CD4-positive, alpha-beta T cell (primary cell): ENCODE measurements at regions of chr7 and their contacts with region 1.

Region 1: DNA sequence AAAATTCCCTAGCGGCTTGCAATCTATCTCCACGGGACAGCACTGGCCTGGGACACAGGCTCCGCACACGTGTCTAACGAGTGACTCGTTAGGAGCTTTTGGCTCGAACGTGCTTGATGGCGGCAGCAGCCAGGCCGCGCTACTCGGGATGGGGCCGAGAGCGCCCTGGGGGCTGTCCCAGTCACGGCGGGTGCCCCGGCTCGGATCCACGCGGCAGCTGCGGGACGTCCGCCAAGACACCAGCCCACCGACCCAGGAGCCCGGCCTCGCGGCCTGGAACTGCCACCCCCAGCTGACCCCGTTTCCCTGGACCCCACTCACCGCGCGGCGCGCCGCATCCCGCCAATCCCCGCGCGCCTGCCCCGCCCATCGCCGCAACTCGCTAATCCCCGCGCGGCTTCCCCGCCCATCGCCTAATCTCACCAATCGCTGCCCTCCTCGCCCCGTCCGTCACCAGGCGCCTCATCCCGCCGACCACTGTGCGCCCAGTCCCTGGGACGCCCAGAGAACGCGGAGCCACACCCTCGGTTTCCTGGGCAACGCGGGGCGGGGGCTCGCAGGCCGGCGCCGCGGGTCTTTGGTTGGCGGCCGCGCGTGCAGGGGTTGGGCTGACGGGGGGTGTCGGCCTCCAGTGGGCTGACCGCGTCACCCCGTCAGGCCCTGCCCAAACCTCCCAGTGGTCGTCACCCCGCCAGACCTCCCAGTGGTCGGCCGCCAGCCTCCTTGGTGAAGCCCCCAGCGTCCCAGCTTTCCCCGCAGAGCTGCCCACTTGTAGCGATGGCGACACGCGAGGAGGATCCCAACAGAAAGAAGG is at the start of gene POLD2:
- DNase-seq: peak; percentile 91 to 98 (median 97)
- ATAC-seq: peak; percentile 98
- H3K4me3 ChIP-seq: peak within 1 kb of the TSS; percentile 82
- H3K4me3 Mint-ChIP-seq: peak within 1 kb of the TSS; percentile 92
- H3K27ac ChIP-seq: peak within 1 kb of the TSS; percentile 33 to 67
- H3K27ac Mint-ChIP-seq: peak within 1 kb of the TSS; percentile 65
- H3K4me1 ChIP-seq: peaks cover 27% of the 10 kb centered on the region
- H3K4me1 Mint-ChIP-seq: peaks cover 17% of the 10 kb centered on the region
- H3K27me3 ChIP-seq: no peaks in the 10 kb centered on the region
- H3K27me3 Mint-ChIP-seq: no peaks in the 10 kb centered on the region
- CTCF ChIP-seq: no peak
- total RNA-seq, gene POLD2: 45.2 to 48.3 TPM

Region 2: GRCh38 chr7:43869006-43869866 is 254.2 kb before region 1 on chr7 and contains the start of gene MRPS24:
- CTCF ChIA-PET with region 1: no interaction called
- POLR2A ChIA-PET with region 1: no interaction called
- intact Hi-C with region 1: loop called in 1 of 2 experiments (anchors 10 kb)
- DNase-seq: peak; percentile 92 to 99 (median 95)
- ATAC-seq: peak; percentile 98
- H3K4me3 ChIP-seq: peak within 1 kb of the TSS; percentile 70
- H3K4me3 Mint-ChIP-seq: peak within 1 kb of the TSS; percentile 92
- H3K27ac ChIP-seq: peak within 1 kb of the TSS; percentile 58 to 68
- H3K27ac Mint-ChIP-seq: peak within 1 kb of the TSS; percentile 90
- H3K4me1 ChIP-seq: peaks cover 20% of the 10 kb centered on the region
- H3K4me1 Mint-ChIP-seq: peaks cover 26% of the 10 kb centered on the region
- H3K27me3 ChIP-seq: no peaks in the 10 kb centered on the region
- H3K27me3 Mint-ChIP-seq: no peaks in the 10 kb centered on the region
- CTCF ChIP-seq: no peak
- total RNA-seq, gene MRPS24: 63.1 to 69.7 TPM

Region 3: DNA sequence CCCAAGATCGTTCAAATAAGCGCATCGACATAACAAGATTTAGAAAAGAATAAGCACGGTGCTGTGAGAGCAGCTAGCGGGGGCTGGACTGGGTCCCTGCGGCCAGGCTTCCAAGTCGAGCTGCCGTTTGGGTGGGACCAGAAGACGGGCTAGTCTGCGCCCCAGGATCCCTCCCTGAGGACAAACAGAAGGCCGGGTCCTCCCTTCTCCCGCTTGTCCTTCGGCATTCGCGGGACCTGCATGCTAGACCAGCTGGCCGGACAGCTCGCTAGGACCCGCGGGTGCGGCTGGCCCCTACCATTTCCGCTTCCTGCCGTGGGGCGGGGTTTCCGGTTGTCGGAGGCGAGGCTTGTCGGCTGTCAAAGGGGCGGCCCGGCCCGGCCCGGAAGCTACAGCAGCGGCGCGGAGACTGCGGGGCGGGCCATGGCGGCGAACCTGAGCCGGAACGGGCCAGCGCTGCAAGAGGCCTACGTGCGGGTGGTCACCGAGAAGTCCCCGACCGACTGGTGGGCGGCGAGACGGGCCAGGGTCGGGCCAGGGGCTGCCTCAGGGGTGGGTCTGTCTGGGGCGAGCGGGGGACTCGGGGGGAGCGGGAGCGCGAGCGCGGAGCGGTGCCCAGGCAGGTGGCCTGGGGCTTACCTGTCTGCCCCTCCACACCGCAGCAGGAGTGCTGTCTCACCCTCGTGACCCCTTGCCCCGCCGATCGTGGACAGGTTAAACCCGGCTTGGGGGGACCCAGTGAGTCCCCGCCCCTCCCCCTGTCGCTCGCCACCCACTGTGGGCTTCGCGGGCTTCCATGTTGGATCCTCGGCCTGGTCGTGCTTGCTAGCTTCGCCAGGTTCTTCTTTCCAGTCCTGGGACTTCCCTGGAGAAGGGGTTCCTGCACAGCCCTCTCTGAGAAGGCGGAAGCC is 78.8 kb before region 1 on chr7 and contains the start of gene DBNL:
- CTCF ChIA-PET with region 1: no interaction called
- POLR2A ChIA-PET with region 1: no interaction called
- intact Hi-C with region 1: loop called in 1 of 2 experiments (anchors 5 kb)
- DNase-seq: peak; percentile 75 to 92 (median 88)
- ATAC-seq: peak; percentile 54
- H3K4me3 ChIP-seq: peak within 1 kb of the TSS; percentile 99
- H3K4me3 Mint-ChIP-seq: peak within 1 kb of the TSS; percentile 87
- H3K27ac ChIP-seq: peak within 1 kb of the TSS; percentile 89
- H3K27ac Mint-ChIP-seq: peak within 1 kb of the TSS; percentile 91
- H3K4me1 ChIP-seq: peaks cover 62% of the 10 kb centered on the region
- H3K4me1 Mint-ChIP-seq: peaks cover 50% of the 10 kb centered on the region
- H3K27me3 ChIP-seq: no peaks in the 10 kb centered on the region
- H3K27me3 Mint-ChIP-seq: no peaks in the 10 kb centered on the region
- CTCF ChIP-seq: no peak
- total RNA-seq, gene DBNL: 88.5 to 90.6 TPM

Region 4: DNA sequence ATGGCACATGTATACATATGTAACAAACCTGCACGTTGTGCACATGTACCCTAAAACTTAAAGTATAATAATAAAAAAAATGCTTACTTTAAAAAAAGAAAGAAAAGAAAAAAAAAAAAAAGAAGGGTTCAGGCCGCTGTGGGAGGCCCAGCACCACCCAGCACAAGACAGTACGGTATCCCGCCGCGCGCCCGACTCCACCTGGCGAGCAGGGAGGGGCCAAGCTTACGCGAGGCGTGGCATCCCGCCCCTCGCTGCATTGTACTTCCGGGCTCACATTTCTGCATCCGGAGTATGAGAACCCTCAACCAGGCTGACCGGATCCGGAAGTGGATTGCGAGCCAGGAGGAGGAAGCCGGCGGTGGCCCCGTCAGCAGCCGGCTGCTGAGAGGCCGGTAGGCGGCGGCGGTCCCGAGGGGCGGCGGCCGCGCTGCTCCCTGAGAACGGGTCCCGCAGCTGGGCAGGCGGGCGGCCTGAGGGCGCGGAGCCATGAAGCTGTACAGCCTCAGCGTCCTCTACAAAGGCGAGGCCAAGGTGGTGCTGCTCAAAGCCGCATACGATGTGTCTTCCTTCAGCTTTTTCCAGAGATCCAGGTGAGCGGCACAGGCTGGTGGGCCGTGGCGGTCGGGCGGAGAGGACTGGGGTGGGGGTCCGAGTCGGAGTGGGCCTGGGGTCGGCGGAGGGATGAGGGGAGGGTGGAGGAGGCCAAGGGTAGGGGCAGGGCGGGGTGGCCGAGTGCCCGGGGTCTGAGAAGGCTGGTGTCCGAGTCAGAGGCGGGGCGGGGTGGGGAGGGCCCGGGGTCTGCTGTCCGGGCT is 77.5 kb after region 1 on chr7 and contains the start of gene YKT6:
- CTCF ChIA-PET with region 1: no interaction called
- POLR2A ChIA-PET with region 1: interaction called, 6 read pairs
- intact Hi-C with region 1: loop called (anchors 2 to 5 kb)
- DNase-seq: peak; percentile 89 to 97 (median 92)
- ATAC-seq: peak; percentile 98
- H3K4me3 ChIP-seq: peak within 1 kb of the TSS; percentile 89
- H3K4me3 Mint-ChIP-seq: peak within 1 kb of the TSS; percentile 83
- H3K27ac ChIP-seq: peak within 1 kb of the TSS in 1 of 2 donors; percentile 56
- H3K27ac Mint-ChIP-seq: peak within 1 kb of the TSS; percentile 62
- H3K4me1 ChIP-seq: peaks cover 15% of the 10 kb centered on the region
- H3K4me1 Mint-ChIP-seq: peaks cover 40% of the 10 kb centered on the region
- H3K27me3 ChIP-seq: peaks cover 0 to 7% of the 10 kb centered on the region in 2 experiments
- H3K27me3 Mint-ChIP-seq: peaks cover 13% of the 10 kb centered on the region
- CTCF ChIP-seq: peak; percentile 65
- total RNA-seq, gene YKT6: 85.0 to 86.4 TPM